Body of pancreas (tissue), 4 donors: ENCODE measurements at regions of chr14 and their contacts with region 1.

Region 1: DNA sequence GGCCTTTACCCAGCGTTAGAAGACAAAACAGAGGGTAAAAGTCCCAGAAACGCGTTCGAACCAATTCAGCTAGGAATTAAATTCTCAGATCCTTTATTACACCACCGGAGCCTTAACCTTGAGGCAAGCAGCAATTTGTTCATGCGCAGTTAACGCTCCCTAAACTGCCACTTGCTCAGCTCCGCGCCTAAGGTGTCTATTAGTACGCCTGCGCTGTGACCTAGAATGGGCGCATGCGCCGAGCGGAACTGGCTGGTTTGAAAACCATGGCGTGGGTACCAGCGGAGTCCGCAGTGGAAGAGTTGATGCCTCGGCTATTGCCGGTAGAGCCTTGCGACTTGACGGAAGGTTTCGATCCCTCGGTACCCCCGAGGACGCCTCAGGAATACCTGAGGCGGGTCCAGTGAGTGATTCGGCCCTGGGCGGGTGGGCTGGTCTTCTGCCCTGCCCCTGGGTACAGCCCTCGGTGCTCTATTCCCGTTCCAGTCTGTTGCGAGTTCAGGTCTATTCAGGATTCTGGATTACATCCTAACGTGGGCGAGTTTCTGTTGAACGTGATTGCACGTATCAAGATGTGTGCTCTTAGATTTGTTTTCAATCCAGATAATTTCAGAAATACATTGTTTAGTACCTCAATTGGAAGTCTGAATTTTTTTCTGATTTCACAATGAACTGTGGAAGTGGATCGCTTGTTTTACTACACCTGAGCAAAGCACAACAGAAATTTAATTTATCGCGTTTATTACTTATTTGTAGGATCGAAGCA is at the start of gene GEMIN2:
- DNase-seq: peak; percentile 94 to 97 (median 96)
- ATAC-seq: peak; percentile 98
- H3K4me3 ChIP-seq: peak within 1 kb of the TSS; percentile 3 to 70
- H3K27ac ChIP-seq: peak within 1 kb of the TSS; percentile 37 to 77 (median 68)
- H3K4me1 ChIP-seq: peaks cover 17% of the 10 kb centered on the region
- H3K27me3 ChIP-seq: no peaks in the 10 kb centered on the region
- CTCF ChIP-seq: peak in 1 of 7 experiments; percentile 8
- POLR2A ChIP-seq: peak in 2 of 3 donors; percentile 56 to 60
- total RNA-seq, gene GEMIN2: 2.3 to 11.4 TPM

Region 2: DNA sequence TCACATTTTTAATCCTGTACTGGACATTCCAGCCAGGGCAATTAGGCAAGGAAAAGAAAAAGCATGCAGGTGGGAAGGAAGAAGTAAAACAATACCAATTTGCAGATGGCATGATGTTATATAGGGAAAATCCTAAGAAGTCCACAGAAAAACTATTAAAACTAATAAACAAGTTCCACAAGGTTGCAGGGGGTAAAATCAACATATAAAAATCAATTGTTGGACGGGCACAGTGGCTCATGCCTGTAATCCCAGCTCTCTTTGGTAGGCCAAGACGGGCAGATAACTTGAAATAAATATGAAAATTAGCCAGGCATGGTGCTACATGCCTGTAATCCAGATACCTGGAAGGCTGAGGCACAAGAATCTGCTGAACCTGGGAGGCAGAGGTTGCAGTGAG is 43.2 kb before region 1 on chr14:
- intact Hi-C with region 1: no loop called
- DNase-seq: no peak
- ATAC-seq: peak; percentile 60
- H3K4me3 ChIP-seq: no peak overlapping the region
- H3K27ac ChIP-seq: peak overlapping the region in 2 of 4 donors; percentile 1 to 42
- H3K4me1 ChIP-seq: no peaks in the 10 kb centered on the region
- H3K27me3 ChIP-seq: no peaks in the 10 kb centered on the region
- CTCF ChIP-seq: no peak
- POLR2A ChIP-seq: no peak

Region 3: DNA sequence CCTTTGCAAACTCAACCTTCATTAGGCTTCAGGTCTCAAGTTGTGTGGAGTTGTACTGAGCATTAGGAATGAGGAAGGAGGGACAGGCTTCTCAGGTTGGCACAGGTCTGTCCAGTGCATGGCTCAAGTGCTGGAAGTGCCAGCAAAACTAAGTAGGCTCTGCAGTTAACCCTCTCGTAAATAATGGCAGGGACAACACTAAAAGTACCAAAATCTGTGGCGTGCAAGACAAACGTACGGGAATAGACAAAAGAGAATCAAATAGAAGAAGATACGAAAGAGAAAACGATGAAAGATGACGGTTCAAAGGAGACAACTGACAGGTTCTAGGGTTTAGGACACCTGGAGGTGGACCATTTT is 55.3 kb after region 1 on chr14:
- intact Hi-C with region 1: loop called (anchors 10 kb)
- DNase-seq: peak in 3 of 4 donors; percentile 24 to 37 (median 29)
- ATAC-seq: peak; percentile 36
- H3K4me3 ChIP-seq: peak overlapping the region; percentile 69 to 74
- H3K27ac ChIP-seq: peak overlapping the region; percentile 94 to 100 (median 98)
- H3K4me1 ChIP-seq: peaks cover 30% of the 10 kb centered on the region
- H3K27me3 ChIP-seq: no peaks in the 10 kb centered on the region
- CTCF ChIP-seq: no peak
- POLR2A ChIP-seq: no peak

Region 4: DNA sequence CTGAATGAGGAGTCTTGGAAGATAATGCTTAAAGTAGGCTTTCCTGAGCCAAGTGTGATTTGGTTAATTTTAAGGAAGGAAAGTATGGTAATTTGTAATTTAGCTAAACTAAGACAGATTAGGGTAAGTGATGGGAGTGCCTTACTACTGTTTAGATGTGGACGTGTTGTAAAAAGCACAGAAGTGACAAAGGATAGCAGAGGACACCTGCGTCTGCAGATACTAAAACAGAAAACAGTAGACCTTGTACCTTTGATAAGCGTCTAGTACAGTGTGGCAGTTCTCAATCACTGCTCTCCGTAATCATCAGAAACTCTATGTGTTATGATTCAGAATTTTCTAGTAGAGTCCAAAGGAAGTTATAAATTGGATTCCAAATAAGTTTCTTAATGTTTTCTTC is 177.4 kb after region 1 on chr14:
- intact Hi-C with region 1: no loop called
- DNase-seq: no peak
- ATAC-seq: no peak
- H3K4me3 ChIP-seq: no peak overlapping the region
- H3K27ac ChIP-seq: no peak overlapping the region
- H3K4me1 ChIP-seq: no peaks in the 10 kb centered on the region
- H3K27me3 ChIP-seq: no peaks in the 10 kb centered on the region
- CTCF ChIP-seq: no peak
- POLR2A ChIP-seq: no peak

Region 5: GRCh38 chr14:39322807-39323206 is 208.6 kb after region 1 on chr14:
- intact Hi-C with region 1: no loop called
- DNase-seq: no peak
- ATAC-seq: no peak
- H3K4me3 ChIP-seq: no peak overlapping the region
- H3K27ac ChIP-seq: no peak overlapping the region
- H3K4me1 ChIP-seq: no peaks in the 10 kb centered on the region
- H3K27me3 ChIP-seq: no peaks in the 10 kb centered on the region
- CTCF ChIP-seq: no peak
- POLR2A ChIP-seq: no peak